BJ (cell line): ENCODE measurements at regions of chr12 and their contacts with region 1.

Region 1: GRCh38 chr12:45368841-45369489 is 153.1 kb downstream of the ANO6 start:
- DNase-seq: peak; percentile 15
- H3K4me3 ChIP-seq: no peak overlapping the region
- H3K27me3 ChIP-seq: no peaks in the 10 kb centered on the region
- CTCF ChIP-seq: no peak

Region 2: GRCh38 chr12:45234139-45234846 is 134.7 kb before region 1 on chr12:
- CTCF ChIA-PET with region 1: no interaction called
- POLR2A ChIA-PET with region 1: interaction called, 10 read pairs
- DNase-seq: peak; percentile 95
- H3K4me3 ChIP-seq: no peak overlapping the region
- H3K27me3 ChIP-seq: no peaks in the 10 kb centered on the region
- CTCF ChIP-seq: no peak

Region 3: GRCh38 chr12:45246236-45246635 is 122.7 kb before region 1 on chr12:
- CTCF ChIA-PET with region 1: no interaction called
- POLR2A ChIA-PET with region 1: no interaction called
- DNase-seq: no peak
- H3K4me3 ChIP-seq: no peak overlapping the region
- H3K27me3 ChIP-seq: no peaks in the 10 kb centered on the region
- CTCF ChIP-seq: no peak

Region 4: DNA sequence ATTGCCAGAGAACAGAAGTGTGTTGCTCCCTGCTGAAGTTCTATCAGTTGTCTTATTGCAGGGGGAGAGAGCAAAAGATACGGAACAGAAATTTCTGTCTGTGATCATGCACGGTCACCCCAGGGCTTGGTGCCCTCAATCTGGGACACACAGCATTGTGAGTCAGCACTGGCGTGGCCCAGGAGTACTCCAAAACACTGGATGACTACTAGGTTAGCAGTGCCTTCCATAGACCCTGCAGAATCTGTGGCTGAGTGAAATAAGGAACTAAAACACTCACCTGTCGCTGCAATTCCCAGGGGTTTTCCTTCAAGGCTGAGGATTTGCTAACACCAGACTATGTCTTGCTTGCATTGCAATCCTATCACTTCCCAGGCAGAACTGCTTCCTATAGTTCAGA is 12.4 kb after region 1 on chr12:
- CTCF ChIA-PET with region 1: no interaction called
- POLR2A ChIA-PET with region 1: no interaction called
- DNase-seq: no peak
- H3K4me3 ChIP-seq: no peak overlapping the region
- H3K27me3 ChIP-seq: no peaks in the 10 kb centered on the region
- CTCF ChIP-seq: no peak